Posterior vena cava (tissue), 2 donors: ENCODE measurements at regions of chr18 and their contacts with region 1.

Region 1: GRCh38 chr18:59332986-59333385 is 14.5 kb upstream of the CPLX4 start:
- DNase-seq: no peak

Region 2: DNA sequence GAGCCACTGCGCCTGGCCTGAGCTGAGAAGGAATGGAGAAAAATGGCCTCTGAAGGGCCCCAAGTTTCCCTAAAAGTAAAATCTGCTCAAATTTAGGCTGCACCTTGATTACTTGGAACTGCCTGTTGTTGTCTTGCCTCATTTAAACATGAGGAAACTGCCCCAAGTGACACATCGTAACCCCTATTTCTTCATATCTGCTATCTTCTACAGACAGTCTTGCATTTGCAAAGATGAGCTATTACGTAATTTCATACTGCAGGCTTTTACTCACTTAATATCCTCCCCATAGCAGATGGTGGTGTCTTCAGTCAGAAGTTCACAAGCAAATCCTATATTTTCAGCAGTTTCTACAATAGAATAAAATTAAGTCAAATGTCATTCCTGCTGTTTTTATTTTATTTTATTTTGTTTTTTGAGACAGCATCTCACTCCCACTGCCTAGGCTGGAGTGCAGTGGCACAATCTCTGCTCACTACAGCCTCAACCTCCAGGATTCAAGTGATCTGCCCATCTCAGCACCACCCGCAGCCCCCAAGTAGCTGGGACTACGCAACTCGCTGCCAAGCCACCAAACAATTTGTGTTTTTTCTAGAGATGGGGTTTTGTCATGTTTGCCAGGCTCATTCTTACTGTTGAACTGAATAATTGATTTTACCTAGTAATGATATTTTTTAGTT is 1666.0 kb before region 1 on chr18:
- intact Hi-C with region 1: loop called in 1 of 2 experiments (anchors 10 kb)
- DNase-seq: no peak

Region 3: GRCh38 chr18:59402432-59403090 is 69.6 kb after region 1 on chr18:
- intact Hi-C with region 1: no loop called
- DNase-seq: peak; percentile 87